ENCODE measurements at regions of chr16 and their contacts with region 1.

Region 1: GRCh38 chr16:74984535-74985296 is at the start of gene WDR59:
- DNase-seq: peak; percentile 98
- ATAC-seq: peak; percentile 99
- H3K4me3 ChIP-seq: peak within 1 kb of the TSS; percentile 56 to 98 (median 83)
- H3K4me3 Mint-ChIP-seq: peak within 1 kb of the TSS; percentile 96
- H3K27ac ChIP-seq: peak within 1 kb of the TSS; percentile 47 to 72
- H3K27ac Mint-ChIP-seq: peak within 1 kb of the TSS; percentile 92
- H3K4me1 ChIP-seq: peaks cover 0 to 15% of the 10 kb centered on the region in 2 donors
- H3K4me1 Mint-ChIP-seq: peaks cover 12% of the 10 kb centered on the region
- H3K27me3 ChIP-seq: no peaks in the 10 kb centered on the region
- H3K27me3 Mint-ChIP-seq: no peaks in the 10 kb centered on the region
- CTCF ChIP-seq: no peak
- total RNA-seq, gene WDR59: 127 and 136 TPM in 2 replicates

Region 2: DNA sequence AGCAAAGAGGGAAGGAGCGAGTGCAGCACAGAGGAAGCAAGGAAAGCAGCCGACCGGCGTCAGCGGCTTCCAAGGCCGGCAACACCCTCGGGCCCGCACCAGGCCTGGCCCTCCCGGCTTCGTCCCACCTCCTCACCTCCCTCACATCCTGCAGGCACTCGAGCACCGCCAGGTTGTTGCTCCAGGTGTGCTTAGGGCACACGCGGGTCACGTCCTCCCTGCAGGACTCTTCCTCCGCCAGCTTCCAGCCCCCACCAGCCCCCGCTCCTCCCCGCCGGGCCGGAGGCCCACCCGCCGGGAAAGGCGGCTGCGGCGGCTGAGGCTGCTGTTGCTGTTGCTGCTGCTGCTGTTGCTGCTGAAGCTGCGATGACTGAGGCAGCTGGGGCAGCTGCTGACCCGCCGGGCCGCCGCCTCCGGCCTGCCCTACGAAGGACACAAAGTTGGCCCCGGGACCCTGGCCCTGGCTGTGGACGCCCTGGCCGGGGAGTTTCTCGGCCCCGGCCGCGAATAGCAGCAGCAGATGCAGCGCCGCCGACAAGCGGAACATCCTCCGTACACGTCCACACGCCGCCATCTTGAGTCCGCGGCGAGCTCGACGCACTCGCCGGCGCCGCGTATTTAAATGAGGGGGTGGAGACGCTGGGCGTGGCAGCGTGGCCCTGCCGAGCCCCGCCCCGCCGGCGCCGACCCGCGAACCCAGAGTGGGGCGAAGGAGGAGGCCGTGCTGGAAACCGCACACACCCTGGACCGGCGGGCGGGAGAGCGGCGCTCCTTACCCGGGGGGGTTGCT is 378.0 kb before region 1 on chr16 and contains the start of gene GLG1:
- CTCF ChIA-PET with region 1: no interaction called
- POLR2A ChIA-PET with region 1: no interaction called
- intact Hi-C with region 1: loop called (anchors 2 kb)
- DNase-seq: peak; percentile 95
- ATAC-seq: peak; percentile 96
- H3K4me3 ChIP-seq: peak within 1 kb of the TSS; percentile 61 to 99 (median 93)
- H3K4me3 Mint-ChIP-seq: peak within 1 kb of the TSS; percentile 90
- H3K27ac ChIP-seq: peak within 1 kb of the TSS; percentile 87 to 92
- H3K27ac Mint-ChIP-seq: peak within 1 kb of the TSS; percentile 85
- H3K4me1 ChIP-seq: peaks cover 27 to 28% of the 10 kb centered on the region in 2 donors
- H3K4me1 Mint-ChIP-seq: peaks cover 40% of the 10 kb centered on the region
- H3K27me3 ChIP-seq: no peaks in the 10 kb centered on the region
- H3K27me3 Mint-ChIP-seq: no peaks in the 10 kb centered on the region
- CTCF ChIP-seq: no peak
- total RNA-seq, gene GLG1: 114 and 123 TPM in 2 replicates

Region 3: GRCh38 chr16:74998481-74999218 is 13.9 kb after region 1 on chr16 and contains the start of gene ZNRF1:
- CTCF ChIA-PET with region 1: interaction called, 32 read pairs
- POLR2A ChIA-PET with region 1: no interaction called
- intact Hi-C with region 1: loop called (anchors 1 kb)
- DNase-seq: peak; percentile 81
- ATAC-seq: peak; percentile 79
- H3K4me3 ChIP-seq: peak within 1 kb of the TSS; percentile 21 to 75 (median 48)
- H3K4me3 Mint-ChIP-seq: peak within 1 kb of the TSS; percentile 91
- H3K27ac ChIP-seq: no peak within 1 kb of the TSS
- H3K27ac Mint-ChIP-seq: peak within 1 kb of the TSS; percentile 82
- H3K4me1 ChIP-seq: peaks cover 24 to 25% of the 10 kb centered on the region in 2 donors
- H3K4me1 Mint-ChIP-seq: peaks cover 17% of the 10 kb centered on the region
- H3K27me3 ChIP-seq: peaks cover 0 to 58% (median 21%) of the 10 kb centered on the region in 4 experiments
- H3K27me3 Mint-ChIP-seq: peaks cover 51% of the 10 kb centered on the region
- CTCF ChIP-seq: peak; percentile 77
- total RNA-seq, gene ZNRF1: 0.75 and 0.76 TPM in 2 replicates

Region 4: DNA sequence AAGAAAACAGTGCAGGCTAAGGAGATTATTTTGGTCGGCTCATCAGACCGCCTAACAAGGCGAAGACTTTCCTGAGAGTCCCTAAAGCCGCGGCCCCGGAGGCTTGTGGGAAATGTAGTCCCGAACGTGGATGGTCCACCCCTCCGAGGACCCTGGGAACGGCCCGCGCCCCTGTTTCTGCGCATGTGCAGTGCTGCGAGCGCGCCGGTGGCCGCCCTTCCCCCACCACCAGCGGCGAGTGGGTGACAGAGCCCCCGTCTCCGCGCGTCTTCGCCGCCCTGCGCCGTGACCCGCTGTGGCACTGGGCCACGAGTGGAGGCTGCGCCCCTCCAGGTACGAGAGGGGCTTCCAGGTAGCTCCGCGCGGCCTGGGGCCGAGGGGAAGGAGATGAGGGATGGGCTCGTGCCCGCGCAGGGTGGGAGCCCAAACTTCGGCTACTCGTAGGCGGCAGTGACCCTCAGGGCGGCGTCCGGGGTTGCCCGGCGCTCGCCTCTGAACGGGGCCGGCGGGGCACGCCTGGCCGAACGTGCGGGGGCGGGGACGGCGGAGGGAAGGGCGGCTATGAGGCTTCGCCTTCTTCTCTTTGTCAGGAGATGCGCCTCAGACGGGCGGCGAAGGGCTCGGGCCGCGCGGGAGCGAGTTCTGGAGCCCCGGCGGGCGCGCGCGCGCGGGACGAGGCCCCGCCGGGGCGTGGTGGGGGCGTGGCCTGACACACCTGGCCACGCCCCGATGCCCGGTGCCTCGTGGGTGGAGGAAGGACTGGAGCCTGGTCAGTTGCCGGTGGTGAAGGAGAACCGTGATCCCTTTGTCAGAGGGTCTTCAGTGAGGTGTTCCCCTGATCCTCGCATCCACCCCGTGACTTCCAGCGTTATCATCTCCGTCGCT is 163.8 kb after region 1 on chr16 and contains the start of gene ZFP1:
- CTCF ChIA-PET with region 1: interaction called, 3 read pairs
- POLR2A ChIA-PET with region 1: no interaction called
- intact Hi-C with region 1: loop called (anchors 1 kb)
- DNase-seq: peak; percentile 95
- ATAC-seq: peak; percentile 86
- H3K4me3 ChIP-seq: peak within 1 kb of the TSS; percentile 54 to 97 (median 95)
- H3K4me3 Mint-ChIP-seq: peak within 1 kb of the TSS; percentile 89
- H3K27ac ChIP-seq: peak within 1 kb of the TSS; percentile 86 to 90
- H3K27ac Mint-ChIP-seq: peak within 1 kb of the TSS; percentile 90
- H3K4me1 ChIP-seq: peaks cover 5 to 7% of the 10 kb centered on the region in 2 donors
- H3K4me1 Mint-ChIP-seq: peaks cover 20% of the 10 kb centered on the region
- H3K27me3 ChIP-seq: peaks cover 0 to 2% (median 0%) of the 10 kb centered on the region in 4 experiments
- H3K27me3 Mint-ChIP-seq: no peaks in the 10 kb centered on the region
- CTCF ChIP-seq: no peak
- total RNA-seq, gene ZFP1: 13.4 and 14.1 TPM in 2 replicates

Region 5: GRCh38 chr16:75361936-75362335 is 377.2 kb after region 1 on chr16:
- CTCF ChIA-PET with region 1: no interaction called
- POLR2A ChIA-PET with region 1: no interaction called
- intact Hi-C with region 1: no loop called
- DNase-seq: no peak
- ATAC-seq: no peak
- H3K4me3 ChIP-seq: no peak overlapping the region
- H3K4me3 Mint-ChIP-seq: no peak overlapping the region
- H3K27ac ChIP-seq: no peak overlapping the region
- H3K27ac Mint-ChIP-seq: no peak overlapping the region
- H3K4me1 ChIP-seq: no peaks in the 10 kb centered on the region
- H3K4me1 Mint-ChIP-seq: no peaks in the 10 kb centered on the region
- H3K27me3 ChIP-seq: peaks cover 0 to 20% (median 11%) of the 10 kb centered on the region in 4 experiments
- H3K27me3 Mint-ChIP-seq: peaks cover 11% of the 10 kb centered on the region
- CTCF ChIP-seq: no peak

Measured in B cell (primary cell).